Aorta (tissue), 5 donors: ENCODE measurements at regions of chr2 and their contacts with region 1.

Region 1: DNA sequence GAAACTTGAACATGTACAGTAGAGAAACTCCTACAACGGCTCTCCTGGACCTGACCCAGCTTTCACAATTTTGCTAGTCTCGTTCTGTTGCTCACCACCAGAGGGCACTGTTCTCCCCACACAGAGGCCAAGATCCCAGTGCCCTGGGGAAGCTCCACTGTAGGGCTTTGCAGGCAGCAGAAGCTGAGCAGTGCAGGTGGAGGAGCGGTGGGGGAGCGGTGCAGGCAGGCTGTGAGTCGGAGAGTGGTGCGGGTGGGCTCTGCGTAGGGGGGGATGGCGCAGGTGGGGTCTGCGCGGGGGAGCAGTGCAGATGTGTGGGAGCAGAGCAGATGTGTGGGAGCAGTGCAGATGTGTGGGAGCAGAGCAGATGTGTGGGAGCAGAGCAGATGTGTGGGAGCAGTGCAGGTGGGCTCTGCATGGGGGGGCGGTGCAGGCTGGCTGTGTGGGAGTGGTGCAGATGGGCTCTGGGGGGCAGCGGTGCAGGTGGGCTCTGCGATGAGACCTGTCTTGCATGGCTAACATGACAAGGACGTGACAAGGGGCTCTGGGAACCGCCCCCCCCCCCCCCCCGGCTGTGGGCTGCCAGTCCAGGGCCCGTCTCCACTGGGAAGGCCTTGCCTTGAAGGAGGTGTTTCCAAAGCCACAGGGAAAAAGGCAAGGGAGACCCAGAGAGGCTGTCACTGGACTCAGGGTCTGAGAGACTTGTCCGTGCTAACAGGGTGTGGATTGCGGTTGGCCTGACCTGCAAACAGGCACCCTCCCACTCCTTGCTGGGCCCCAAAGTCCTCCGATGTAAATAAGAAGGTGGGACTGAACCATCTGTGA is 7.3 kb downstream of the CYS1 start:
- DNase-seq: peak; percentile 86 to 89
- ATAC-seq: peak; percentile 92
- H3K4me3 ChIP-seq: no peak overlapping the region
- H3K27ac ChIP-seq: no peak overlapping the region
- H3K4me1 ChIP-seq: no peaks in the 10 kb centered on the region
- H3K27me3 ChIP-seq: no peaks in the 10 kb centered on the region

Region 2: DNA sequence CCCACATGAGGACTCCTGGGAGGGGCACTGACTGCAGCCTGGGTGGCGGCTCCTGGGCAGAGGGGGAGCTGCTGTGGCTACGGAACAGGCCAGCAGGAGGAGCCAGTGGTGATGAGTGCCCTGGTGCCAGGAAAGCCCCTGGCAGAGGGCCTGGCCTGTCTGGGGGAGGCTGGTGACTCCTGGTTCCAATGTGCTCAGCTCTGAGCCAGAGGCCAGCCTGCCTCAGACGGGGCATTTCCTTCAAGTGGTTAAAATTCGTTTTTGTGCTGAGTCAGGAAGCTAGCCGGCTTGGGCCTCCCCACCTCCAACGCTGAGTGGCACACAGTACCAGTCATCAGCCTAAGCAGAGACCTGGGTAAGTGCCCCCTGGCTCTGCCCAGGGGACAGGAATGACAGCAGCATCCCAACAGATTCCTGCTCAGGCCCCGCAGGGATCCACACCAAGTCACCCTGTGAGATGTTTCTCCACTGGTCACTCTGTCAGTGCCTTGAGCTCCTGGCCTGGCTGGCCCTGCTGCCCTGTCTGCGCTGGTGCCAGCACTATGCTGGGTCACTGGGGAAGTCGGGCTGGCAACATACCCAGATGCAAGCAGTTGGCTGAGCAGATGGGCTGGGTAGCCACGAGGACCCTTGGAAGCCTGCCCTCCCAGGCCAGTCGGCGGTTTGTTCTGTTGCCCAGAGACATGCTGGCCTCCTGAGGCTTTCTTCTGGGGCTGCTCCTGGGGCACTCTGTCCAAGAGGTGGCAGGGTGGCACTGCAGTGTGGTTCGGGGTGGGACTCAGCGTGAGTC is 36.6 kb before region 1 on chr2:
- intact Hi-C with region 1: no loop called
- DNase-seq: peak; percentile 91 to 96
- ATAC-seq: peak; percentile 87
- H3K4me3 ChIP-seq: no peak overlapping the region
- H3K27ac ChIP-seq: peak overlapping the region in 1 of 2 donors; percentile 29
- H3K4me1 ChIP-seq: no peaks in the 10 kb centered on the region
- H3K27me3 ChIP-seq: no peaks in the 10 kb centered on the region

Region 3: DNA sequence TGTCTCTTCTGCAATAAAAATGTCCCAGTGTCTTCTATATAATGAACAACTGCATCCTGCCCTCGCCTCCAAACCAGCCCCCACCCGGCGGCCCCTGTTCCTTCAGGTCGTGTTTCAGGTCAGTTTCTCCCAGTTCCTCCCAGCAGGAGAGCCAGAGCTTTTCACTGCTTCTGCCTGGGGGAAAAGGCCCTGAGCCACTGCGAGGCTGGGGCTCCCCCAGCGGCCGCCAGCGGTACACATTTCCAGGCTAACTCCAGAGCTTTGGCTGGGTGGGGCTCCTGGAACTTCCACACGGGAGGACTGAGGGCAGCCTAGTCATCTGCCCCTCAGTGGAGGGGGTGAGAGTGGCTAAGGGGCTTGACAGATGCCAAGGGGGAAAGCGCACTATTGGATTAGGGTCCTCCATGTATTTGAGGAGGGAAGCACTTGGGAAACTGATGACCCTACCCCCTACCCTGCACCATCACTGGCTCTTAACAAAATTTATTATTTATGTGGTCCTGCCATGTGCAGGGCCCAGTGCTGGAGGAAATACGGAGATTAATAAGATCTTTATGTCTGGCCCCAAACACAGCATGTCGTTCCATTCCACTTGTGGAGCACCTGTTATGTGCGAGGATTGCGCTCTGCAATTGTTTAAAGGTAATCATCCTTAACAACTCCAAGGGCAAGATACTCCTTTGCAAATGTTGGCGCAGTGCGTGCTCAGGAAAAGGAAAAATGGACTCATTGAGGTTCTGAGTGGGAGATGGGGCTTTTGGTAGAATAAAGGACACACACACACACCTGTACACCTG is 24.7 kb after region 1 on chr2:
- intact Hi-C with region 1: loop called (anchors 1 to 2 kb)
- DNase-seq: peak; percentile 75 to 89
- ATAC-seq: peak; percentile 87
- H3K4me3 ChIP-seq: no peak overlapping the region
- H3K27ac ChIP-seq: no peak overlapping the region
- H3K4me1 ChIP-seq: no peaks in the 10 kb centered on the region
- H3K27me3 ChIP-seq: no peaks in the 10 kb centered on the region

Region 4: DNA sequence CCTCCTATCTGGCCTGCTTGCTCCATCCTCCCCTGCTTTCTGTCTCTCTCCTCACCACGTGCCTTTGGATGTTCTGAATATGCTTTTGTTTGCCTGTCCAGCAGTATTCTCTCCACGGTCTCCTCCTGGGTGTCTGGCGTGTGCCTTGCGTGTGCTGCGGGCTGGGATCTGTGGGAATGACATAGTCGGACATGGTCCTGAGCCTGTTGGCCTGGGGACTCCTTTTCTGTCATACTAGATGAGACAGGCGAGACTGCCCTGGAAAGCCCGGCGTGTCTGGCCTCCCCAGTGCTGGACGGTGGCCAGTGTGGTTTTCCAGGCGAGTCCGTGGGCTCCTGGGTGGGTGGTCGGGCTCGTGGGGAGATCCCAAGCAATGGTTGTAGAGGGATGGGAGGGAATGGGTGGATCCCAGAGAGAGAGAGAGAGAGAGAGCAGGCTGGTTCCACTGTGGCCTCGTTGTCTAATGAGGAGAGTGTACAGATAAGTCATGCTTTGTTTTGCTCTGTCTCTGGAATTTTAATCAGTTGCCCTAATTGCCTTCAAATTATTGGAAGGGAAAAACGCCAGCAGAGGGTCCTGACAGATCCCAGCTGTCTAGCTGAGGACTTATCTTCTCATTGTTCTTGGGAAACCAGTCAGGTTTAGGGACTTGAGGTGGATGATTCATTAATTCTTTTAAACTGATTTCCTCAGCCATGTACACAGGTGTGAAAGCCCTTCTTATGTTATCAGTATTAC is 288.2 kb after region 1 on chr2:
- intact Hi-C with region 1: no loop called
- DNase-seq: no peak
- ATAC-seq: no peak
- H3K4me3 ChIP-seq: no peak overlapping the region
- H3K27ac ChIP-seq: no peak overlapping the region
- H3K4me1 ChIP-seq: no peaks in the 10 kb centered on the region
- H3K27me3 ChIP-seq: no peaks in the 10 kb centered on the region

Region 5: DNA sequence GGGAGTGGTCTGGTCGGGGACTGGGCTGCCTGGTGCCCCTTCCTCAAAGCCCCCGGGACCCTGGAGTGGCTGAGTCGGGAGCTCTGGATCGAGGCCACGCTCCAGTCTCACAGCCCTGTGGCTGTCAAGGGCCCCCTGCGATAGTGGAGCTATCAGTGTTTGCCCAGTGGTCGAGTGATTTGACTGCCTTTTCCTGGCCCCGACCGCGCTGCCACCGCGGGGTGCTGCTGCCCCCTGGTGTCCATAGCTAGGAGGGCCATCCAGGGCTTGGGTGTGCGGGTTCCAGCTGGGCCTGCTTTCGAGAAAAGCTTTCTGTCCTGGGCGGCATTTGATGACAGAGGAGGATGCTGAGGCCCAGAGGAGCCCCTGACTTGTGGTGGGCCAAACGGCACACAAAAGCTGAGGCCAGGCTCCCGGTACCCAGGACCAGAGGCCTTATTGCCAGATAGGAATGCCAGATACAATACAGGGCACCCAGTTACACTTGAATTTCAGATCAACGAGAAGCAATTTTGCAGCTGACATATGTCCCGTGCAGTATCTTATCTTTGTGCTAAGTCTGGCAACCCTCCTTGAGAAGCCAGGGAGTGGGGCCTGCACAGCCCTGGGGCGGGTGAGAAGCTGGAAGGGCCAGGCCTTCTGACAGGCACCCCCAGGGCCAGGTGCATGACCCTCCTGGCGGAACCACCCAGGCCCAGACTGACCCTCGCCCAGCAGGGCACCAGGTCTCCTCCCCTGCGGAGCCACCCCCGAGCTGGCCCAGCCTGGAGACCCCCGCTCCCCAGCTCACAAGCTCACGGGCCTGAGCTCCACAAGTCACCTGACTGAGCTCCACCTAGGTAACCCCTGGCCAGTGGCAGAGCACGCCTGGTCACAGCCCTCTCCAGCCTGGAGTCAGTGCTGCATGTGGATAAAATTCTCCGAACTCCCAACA is 362.3 kb after region 1 on chr2:
- intact Hi-C with region 1: loop called (anchors 5 kb)
- DNase-seq: peak; percentile 81 to 92
- ATAC-seq: peak; percentile 84
- H3K4me3 ChIP-seq: no peak overlapping the region
- H3K27ac ChIP-seq: no peak overlapping the region
- H3K4me1 ChIP-seq: no peaks in the 10 kb centered on the region
- H3K27me3 ChIP-seq: no peaks in the 10 kb centered on the region